Astrocyte of the cerebellum (primary cell): ENCODE measurements at regions of chr4 and their contacts with region 1.

Region 1: DNA sequence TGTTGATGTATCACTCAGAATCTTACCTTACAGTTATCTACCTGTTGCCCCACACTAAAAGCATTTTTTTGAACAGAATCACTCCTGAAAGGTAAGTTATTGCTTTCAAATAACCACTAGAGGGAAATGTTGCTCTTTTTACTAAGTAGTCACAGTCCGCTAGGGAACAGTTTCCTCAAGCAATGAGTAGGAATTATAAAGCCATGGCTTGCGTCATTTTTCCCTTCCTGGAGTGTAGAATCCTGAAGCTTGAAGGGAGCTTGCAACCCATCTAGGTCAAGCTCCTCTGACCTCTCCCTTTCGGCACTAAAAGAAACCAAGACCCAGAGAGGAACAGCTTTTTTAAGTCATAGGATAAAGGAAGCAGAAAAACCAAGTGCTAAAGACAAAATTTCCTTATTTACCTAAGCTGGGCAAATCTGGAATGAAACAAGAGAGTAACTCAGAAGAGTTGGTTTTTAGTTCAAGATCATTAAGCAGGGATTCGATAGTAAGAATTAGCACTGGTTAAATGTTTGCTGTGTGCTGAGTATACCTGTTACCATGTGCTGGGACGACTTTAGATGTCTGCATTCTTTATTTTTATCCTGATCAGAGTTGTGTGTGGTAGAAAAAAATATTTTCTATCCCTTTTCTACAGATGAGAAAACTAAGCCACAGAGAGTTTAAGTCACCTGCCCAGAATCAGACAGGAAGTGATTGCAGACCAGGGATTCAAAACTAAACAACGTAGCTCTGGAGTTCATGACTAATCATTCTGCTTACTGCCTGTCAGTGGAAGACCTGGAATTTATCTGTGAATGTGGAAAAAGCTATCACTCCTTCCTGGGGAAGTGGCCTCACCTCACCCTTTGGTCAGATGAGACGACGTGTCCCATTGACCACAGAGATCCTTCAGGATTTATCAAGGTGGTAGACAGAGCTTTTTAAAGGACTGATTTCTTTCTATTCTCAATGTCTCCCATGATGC is 631.5 kb downstream of the RAB28 start:
- DNase-seq: peak; percentile 59
- H3K4me3 ChIP-seq: no peak overlapping the region
- CTCF ChIP-seq: peak; percentile 51

Region 2: GRCh38 chr4:12770351-12770750 is 82.3 kb before region 1 on chr4:
- in situ Hi-C with region 1: no loop called
- DNase-seq: no peak
- H3K4me3 ChIP-seq: no peak overlapping the region
- CTCF ChIP-seq: no peak

Region 3: DNA sequence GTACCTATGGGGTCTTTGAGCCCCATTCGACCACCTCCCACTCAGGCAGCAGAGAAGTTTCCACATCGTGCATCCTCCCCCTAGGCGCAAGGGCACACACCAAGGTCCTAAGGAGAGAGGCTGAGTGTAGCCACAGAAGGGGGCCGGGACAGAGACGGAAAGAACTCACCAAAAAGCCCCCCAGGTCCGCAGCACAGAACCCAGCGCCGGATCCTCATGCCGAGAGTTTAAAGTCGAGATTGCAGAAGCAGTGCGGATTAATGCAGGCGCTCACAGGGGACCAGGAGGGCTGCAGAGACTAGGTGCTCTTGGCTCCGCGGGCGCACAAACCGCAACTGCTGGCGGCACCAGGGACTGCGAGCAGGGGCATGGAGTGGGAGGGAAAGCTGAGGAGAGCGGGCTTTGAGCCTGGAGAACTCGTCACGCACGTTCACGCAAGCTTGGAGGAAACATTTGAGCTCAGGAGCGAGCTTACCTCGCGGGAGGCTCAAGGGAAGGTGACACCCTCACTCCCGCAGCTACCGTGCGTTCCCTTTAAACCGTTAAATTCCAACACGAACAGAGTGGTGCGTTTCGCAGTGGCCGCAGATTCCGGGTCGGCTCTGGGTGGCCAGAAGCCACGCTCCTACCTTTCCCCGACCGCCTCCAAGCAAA is 683.2 kb after region 1 on chr4:
- in situ Hi-C with region 1: loop called (anchors 10 kb)
- DNase-seq: no peak
- H3K4me3 ChIP-seq: no peak overlapping the region
- CTCF ChIP-seq: no peak